ENCODE measurements at regions of chr12 and their contacts with region 1.

Region 1: GRCh38 chr12:4908684-4909409 is 858 bp upstream of the KCNA1 start:
- DNase-seq: peak in 9 of 10 donors; percentile 28 to 75 (median 63)
- H3K4me3 ChIP-seq: peak overlapping the region; percentile 5 to 75 (median 59)
- H3K27ac ChIP-seq: peak overlapping the region in 42 of 59 donors; percentile 22 to 91 (median 76)
- H3K27me3 ChIP-seq: peaks cover 0 to 82% (median 35%) of the 10 kb centered on the region in 45 donors
- CTCF ChIP-seq: peak in 6 of 56 donors; percentile 13 to 26 (median 17)

Region 2: GRCh38 chr12:4962539-4963486 is 54.0 kb after region 1 on chr12:
- intact Hi-C with region 1: loop called in 1 of 2 experiments (anchors 10 kb)
- DNase-seq: peak in 3 of 10 donors; percentile 52 to 68 (median 60)
- H3K4me3 ChIP-seq: no peak overlapping the region
- H3K27ac ChIP-seq: peak overlapping the region in 7 of 59 donors; percentile 8 to 89 (median 80)
- H3K27me3 ChIP-seq: peaks cover 0 to 7% (median 0%) of the 10 kb centered on the region in 45 donors
- CTCF ChIP-seq: no peak